Activated naive CD4-positive, alpha-beta T cell treated with anti-CD3 and anti-CD28 coated beads for 36 hours (primary cell): ENCODE measurements at regions of chr12 and their contacts with region 1.

Region 1: DNA sequence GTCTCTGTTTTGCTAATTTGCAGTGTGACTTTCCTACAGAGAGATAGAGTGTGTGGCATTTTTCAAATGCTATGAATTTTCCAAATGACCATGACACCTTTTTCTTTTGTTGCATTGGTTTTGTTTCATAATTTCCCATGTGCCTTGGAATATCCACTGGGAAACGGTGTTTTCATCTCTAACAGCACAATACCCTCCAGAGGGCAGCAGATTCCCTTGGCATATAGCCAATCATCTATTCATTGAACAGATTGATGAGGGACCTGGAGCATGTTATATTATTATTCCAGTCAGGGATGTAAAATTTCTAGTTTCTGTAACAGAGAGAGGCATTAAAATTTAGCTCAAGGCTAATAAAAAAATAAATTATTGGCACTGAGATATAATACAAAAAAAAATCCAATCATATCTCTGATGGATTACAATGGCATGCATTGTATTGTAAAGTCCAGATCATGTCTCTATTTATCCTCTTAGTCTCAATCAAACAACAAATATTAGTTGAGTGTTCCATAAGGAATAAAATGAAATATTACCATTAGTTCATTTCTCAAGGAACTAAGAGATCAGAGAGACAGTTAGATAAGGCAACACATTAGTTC is 29.6 kb upstream of the NTN4 start:
- DNase-seq: peak; percentile 28
- H3K4me3 Mint-ChIP-seq: no peak overlapping the region
- H3K27ac Mint-ChIP-seq: no peak overlapping the region
- H3K4me1 Mint-ChIP-seq: no peaks in the 10 kb centered on the region
- H3K27me3 Mint-ChIP-seq: peaks cover 14% of the 10 kb centered on the region

Region 2: GRCh38 chr12:95582230-95583058 is 237.8 kb before region 1 on chr12:
- CTCF ChIA-PET with region 1: no interaction called
- intact Hi-C with region 1: loop called (anchors 2 kb)
- DNase-seq: no peak
- H3K4me3 Mint-ChIP-seq: no peak overlapping the region
- H3K27ac Mint-ChIP-seq: no peak overlapping the region
- H3K4me1 Mint-ChIP-seq: no peaks in the 10 kb centered on the region
- H3K27me3 Mint-ChIP-seq: peaks cover 3% of the 10 kb centered on the region

Region 3: DNA sequence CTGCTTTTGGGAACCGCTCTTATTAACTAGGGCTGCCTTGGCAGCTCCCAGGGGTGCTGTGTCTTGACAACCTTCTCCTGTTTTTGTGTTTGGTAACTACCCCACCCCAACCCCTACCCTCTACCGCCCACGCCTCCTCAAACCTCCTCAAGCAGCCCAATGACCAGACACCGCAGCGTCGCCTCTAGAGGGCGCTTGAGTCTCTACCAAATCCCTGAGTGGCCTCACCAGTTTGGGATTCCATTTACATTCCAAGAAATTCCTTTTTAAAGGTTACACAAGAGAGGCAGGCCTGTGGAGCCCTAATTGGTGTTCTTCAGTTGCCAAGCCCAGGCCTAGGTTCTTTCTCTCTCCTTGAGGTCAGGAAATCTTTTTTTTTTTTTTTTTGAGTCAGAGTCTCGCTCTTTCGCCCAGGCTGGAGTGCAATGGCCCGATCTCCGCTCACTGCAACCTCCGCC is 196.6 kb before region 1 on chr12:
- CTCF ChIA-PET with region 1: no interaction called
- intact Hi-C with region 1: loop called (anchors 1 kb)
- DNase-seq: peak; percentile 44
- H3K4me3 Mint-ChIP-seq: no peak overlapping the region
- H3K27ac Mint-ChIP-seq: no peak overlapping the region
- H3K4me1 Mint-ChIP-seq: no peaks in the 10 kb centered on the region
- H3K27me3 Mint-ChIP-seq: no peaks in the 10 kb centered on the region

Region 4: GRCh38 chr12:95742586-95742985 is 77.6 kb before region 1 on chr12:
- CTCF ChIA-PET with region 1: no interaction called
- intact Hi-C with region 1: no loop called
- DNase-seq: no peak
- H3K4me3 Mint-ChIP-seq: no peak overlapping the region
- H3K27ac Mint-ChIP-seq: no peak overlapping the region
- H3K4me1 Mint-ChIP-seq: no peaks in the 10 kb centered on the region
- H3K27me3 Mint-ChIP-seq: peaks cover 3% of the 10 kb centered on the region